ENCODE measurements at regions of chr11 and their contacts with region 1.

Region 1: GRCh38 chr11:69172674-69173073 is 16.9 kb downstream of the SMIM38 start:
- H3K4me3 ChIP-seq: no peak overlapping the region
- H3K27ac ChIP-seq: no peak overlapping the region
- H3K4me1 ChIP-seq: no peaks in the 10 kb centered on the region
- CTCF ChIP-seq: no peak

Region 2: GRCh38 chr11:68569357-68569756 is 603.3 kb before region 1 on chr11:
- CTCF ChIA-PET with region 1: no interaction called
- POLR2A ChIA-PET with region 1: interaction called, 12 read pairs
- H3K4me3 ChIP-seq: no peak overlapping the region
- H3K27ac ChIP-seq: no peak overlapping the region
- H3K4me1 ChIP-seq: no peaks in the 10 kb centered on the region
- CTCF ChIP-seq: no peak

Measured in HEK293 (cell line).